CD14-positive monocyte (primary cell): ENCODE measurements at regions of chr13 and their contacts with region 1.

Region 1: DNA sequence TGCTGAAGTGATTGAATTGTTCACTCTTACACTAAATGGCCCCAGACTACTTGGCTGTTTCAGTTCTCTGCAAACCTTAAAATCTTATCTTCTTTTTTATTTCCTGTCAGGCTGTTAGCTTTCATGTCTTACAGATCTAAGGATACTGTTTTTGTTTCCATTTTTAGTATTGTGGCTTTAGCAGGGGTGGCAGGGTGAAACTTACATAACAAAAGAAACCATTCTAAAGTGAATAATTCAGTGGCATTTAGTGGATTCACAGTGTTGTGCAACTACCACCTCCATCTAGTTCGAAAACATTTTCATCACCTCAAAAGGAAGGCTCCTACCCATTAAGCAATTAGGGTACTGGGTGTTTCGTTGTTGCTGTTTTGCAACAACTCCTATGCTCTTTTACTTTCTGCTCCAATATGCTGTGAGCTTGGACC is 19.8 kb downstream of the TMEM272 start:
- DNase-seq: peak; percentile 70 to 90 (median 87)
- H3K4me3 ChIP-seq: peak overlapping the region in 1 of 3 experiments; percentile 42
- H3K4me3 Mint-ChIP-seq: peak overlapping the region; percentile 41 to 48
- H3K27ac ChIP-seq: peak overlapping the region; percentile 78 to 83
- H3K27ac Mint-ChIP-seq: peak overlapping the region; percentile 90 to 98 (median 96)
- H3K4me1 ChIP-seq: peaks cover 98 to 100% of the 10 kb centered on the region in 2 donors
- H3K4me1 Mint-ChIP-seq: peaks cover 100% of the 10 kb centered on the region
- H3K27me3 ChIP-seq: no peaks in the 10 kb centered on the region
- H3K27me3 Mint-ChIP-seq: no peaks in the 10 kb centered on the region
- CTCF ChIP-seq: no peak

Region 2: DNA sequence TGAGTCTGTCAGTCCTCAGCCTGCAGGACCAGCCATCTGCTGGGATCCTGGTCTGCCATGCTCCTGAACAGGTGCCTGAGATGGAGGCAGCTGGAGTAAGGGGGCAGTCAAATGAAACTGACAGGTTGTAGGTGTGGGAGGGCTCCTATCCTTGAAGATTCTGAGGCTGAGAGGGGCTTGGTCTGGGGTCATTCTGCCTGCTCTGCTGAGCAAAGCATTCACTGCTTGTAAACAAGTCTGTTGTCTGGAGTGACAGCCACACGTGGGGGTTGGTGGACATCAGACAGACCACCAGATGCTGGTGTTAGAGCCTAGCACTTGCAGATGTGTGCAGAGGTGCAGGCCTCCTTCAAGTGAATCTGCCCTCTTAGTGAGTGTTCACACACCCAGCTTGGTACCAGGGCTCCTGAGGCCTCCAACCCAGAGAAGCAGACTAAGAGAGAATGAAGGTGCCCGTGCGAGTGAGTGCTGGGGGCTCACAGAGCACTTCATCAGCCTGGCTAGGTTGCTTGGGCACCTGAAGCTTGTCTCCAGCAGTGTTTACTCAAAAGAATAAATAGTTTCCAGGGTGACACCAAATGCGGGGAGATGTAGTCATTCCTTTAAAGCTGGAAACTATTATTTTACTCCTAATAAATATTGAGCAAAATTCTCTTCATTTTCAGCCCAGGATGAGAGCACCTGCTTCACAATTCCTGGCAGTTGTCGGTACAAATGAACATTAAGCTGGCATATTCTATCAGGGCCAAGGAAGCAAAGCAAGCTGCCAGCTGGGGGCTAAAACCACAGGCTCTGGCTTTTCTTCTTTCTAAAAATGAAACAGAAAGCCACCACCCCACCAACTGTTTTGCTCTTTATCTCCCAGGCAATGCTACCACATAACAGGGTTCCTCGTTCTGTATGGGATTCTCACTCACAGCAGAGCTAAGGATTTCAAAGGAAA is 833.3 kb before region 1 on chr13:
- intact Hi-C with region 1: no loop called
- DNase-seq: peak in 1 of 3 donors; percentile 7
- H3K4me3 ChIP-seq: peak overlapping the region in 1 of 3 experiments; percentile 32
- H3K4me3 Mint-ChIP-seq: peak overlapping the region; percentile 38 to 78
- H3K27ac ChIP-seq: peak overlapping the region in 1 of 2 donors; percentile 30
- H3K27ac Mint-ChIP-seq: peak overlapping the region in 5 of 7 donors; percentile 51 to 88 (median 77)
- H3K4me1 ChIP-seq: peaks cover 14 to 19% of the 10 kb centered on the region in 2 donors
- H3K4me1 Mint-ChIP-seq: peaks cover 26% of the 10 kb centered on the region
- H3K27me3 ChIP-seq: no peaks in the 10 kb centered on the region
- H3K27me3 Mint-ChIP-seq: peaks cover 2 to 7% (median 2%) of the 10 kb centered on the region in 3 donors
- CTCF ChIP-seq: no peak

Region 3: GRCh38 chr13:51760592-51760991 is 64.6 kb before region 1 on chr13:
- intact Hi-C with region 1: no loop called
- DNase-seq: no peak
- H3K4me3 ChIP-seq: no peak overlapping the region
- H3K4me3 Mint-ChIP-seq: no peak overlapping the region
- H3K27ac ChIP-seq: peak overlapping the region in 1 of 2 donors; percentile 22
- H3K27ac Mint-ChIP-seq: peak overlapping the region in 1 of 7 donors; percentile 69
- H3K4me1 ChIP-seq: no peaks in the 10 kb centered on the region
- H3K4me1 Mint-ChIP-seq: peaks cover 3% of the 10 kb centered on the region
- H3K27me3 ChIP-seq: no peaks in the 10 kb centered on the region
- H3K27me3 Mint-ChIP-seq: no peaks in the 10 kb centered on the region
- CTCF ChIP-seq: no peak

Region 4: DNA sequence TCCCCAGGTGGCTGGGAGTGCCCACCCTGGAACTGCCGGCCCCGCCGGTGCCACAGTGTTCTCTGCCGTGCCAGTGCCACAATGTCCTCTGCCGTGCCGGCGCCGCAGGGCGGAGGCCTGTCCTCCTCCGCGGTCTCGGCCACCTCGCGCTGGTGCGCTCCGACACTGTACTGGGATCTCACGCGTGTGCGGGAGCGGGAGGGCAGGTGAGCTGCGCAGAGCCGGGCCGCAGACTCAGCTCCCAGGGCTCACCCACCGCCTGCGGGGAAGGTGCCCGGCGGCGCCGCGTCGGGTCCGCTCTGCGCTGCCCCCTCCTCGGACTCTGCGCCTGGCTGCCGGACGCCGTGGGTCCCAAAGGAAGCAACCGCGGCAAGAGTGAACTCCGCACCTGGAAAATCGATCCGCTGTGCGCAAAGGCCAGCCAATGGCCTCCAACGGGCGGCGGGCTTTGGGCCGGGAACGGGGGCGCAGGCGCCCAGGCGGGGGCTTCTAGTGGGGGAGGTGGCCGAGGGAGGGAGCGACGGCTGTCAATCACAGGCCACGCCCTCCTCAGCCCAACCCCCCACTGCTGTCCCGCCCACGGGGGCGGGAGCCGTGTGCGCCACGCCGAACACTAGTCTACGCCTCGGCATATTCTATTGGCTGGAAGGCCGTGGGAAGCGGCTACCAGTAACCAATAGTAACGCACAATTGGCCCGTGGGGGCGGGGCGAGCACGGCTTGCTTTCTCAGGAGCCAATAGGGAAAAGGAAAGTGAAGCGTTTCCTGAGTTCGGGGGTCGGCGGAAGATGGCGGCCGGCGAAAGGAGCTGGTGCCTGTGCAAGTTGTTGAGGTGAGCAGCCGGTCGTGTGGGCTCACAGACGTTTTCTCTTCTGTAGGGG is 186.7 kb after region 1 on chr13 and contains the start of gene ALG11:
- intact Hi-C with region 1: loop called in 1 of 2 experiments (anchors 10 kb)
- DNase-seq: peak; percentile 95 to 99 (median 97)
- H3K4me3 ChIP-seq: peak within 1 kb of the TSS; percentile 74 to 97 (median 87)
- H3K4me3 Mint-ChIP-seq: peak within 1 kb of the TSS; percentile 95 to 99
- H3K27ac ChIP-seq: peak within 1 kb of the TSS; percentile 24 to 86
- H3K27ac Mint-ChIP-seq: peak within 1 kb of the TSS; percentile 90 to 98 (median 95)
- H3K4me1 ChIP-seq: peaks cover 16 to 24% of the 10 kb centered on the region in 2 donors
- H3K4me1 Mint-ChIP-seq: peaks cover 24% of the 10 kb centered on the region
- H3K27me3 ChIP-seq: peaks cover 22 to 33% of the 10 kb centered on the region in 2 donors
- H3K27me3 Mint-ChIP-seq: peaks cover 26 to 37% (median 30%) of the 10 kb centered on the region in 3 donors
- CTCF ChIP-seq: no peak
- polyA plus RNA-seq, gene ALG11: 3.7 to 16.9 (median 14.2) TPM